Naive thymus-derived CD4-positive, alpha-beta T cell (primary cell): ENCODE measurements at regions of chr15 and their contacts with region 1.

Region 1: DNA sequence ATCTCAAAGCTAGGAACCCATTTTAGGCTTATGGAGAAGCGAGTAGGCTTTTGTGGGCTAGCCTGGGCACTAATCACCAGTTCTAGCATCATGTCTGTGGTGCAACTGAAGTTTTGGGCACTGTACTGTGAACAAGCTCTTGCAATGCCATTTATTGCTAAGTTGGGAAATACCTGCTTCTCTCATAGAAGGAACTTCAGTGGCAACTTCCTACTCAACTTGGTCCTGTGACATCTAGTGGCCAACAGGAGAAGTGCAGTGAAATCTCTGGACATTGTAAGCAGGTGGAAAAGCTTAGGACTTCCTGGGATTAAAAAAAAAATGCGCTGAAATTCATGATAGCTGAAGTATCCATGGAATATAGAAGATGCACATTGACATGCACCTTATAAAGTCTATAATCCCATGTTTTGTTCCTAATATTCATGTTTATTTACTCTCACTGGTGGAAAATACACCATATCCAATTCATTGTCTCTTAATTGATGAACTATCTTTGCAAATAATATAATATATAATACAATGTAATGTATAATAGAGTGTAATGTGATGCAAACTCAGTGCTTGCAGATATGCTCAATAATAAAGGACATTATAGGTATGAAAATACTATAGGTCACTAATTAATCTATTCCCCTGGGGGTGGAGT is 6.5 kb upstream of the ALDH1A3 start:
- DNase-seq: peak in 8 of 9 donors; percentile 10 to 59 (median 48)
- ATAC-seq: peak; percentile 83
- H3K4me3 ChIP-seq: no peak overlapping the region
- H3K4me3 Mint-ChIP-seq: no peak overlapping the region
- H3K27ac ChIP-seq: no peak overlapping the region
- H3K27ac Mint-ChIP-seq: no peak overlapping the region
- H3K4me1 ChIP-seq: no peaks in the 10 kb centered on the region
- H3K4me1 Mint-ChIP-seq: no peaks in the 10 kb centered on the region
- H3K27me3 ChIP-seq: peaks cover 0 to under 1% of the 10 kb centered on the region in 2 donors
- H3K27me3 Mint-ChIP-seq: peaks cover 14 to 43% (median 27%) of the 10 kb centered on the region in 5 donors

Region 2: GRCh38 chr15:100627789-100628395 is 245.3 kb before region 1 on chr15:
- CTCF ChIA-PET with region 1: interaction called, 8 read pairs
- POLR2A ChIA-PET with region 1: no interaction called
- intact Hi-C with region 1: loop called (anchors 1 kb)
- DNase-seq: peak; percentile 26 to 73 (median 63)
- ATAC-seq: peak; percentile 95
- H3K4me3 ChIP-seq: no peak overlapping the region
- H3K4me3 Mint-ChIP-seq: no peak overlapping the region
- H3K27ac ChIP-seq: no peak overlapping the region
- H3K27ac Mint-ChIP-seq: peak overlapping the region in 7 of 9 donors; percentile 10 to 57 (median 38)
- H3K4me1 ChIP-seq: no peaks in the 10 kb centered on the region
- H3K4me1 Mint-ChIP-seq: peaks cover 17 to 46% (median 33%) of the 10 kb centered on the region in 7 donors
- H3K27me3 ChIP-seq: no peaks in the 10 kb centered on the region
- H3K27me3 Mint-ChIP-seq: no peaks in the 10 kb centered on the region

Region 3: DNA sequence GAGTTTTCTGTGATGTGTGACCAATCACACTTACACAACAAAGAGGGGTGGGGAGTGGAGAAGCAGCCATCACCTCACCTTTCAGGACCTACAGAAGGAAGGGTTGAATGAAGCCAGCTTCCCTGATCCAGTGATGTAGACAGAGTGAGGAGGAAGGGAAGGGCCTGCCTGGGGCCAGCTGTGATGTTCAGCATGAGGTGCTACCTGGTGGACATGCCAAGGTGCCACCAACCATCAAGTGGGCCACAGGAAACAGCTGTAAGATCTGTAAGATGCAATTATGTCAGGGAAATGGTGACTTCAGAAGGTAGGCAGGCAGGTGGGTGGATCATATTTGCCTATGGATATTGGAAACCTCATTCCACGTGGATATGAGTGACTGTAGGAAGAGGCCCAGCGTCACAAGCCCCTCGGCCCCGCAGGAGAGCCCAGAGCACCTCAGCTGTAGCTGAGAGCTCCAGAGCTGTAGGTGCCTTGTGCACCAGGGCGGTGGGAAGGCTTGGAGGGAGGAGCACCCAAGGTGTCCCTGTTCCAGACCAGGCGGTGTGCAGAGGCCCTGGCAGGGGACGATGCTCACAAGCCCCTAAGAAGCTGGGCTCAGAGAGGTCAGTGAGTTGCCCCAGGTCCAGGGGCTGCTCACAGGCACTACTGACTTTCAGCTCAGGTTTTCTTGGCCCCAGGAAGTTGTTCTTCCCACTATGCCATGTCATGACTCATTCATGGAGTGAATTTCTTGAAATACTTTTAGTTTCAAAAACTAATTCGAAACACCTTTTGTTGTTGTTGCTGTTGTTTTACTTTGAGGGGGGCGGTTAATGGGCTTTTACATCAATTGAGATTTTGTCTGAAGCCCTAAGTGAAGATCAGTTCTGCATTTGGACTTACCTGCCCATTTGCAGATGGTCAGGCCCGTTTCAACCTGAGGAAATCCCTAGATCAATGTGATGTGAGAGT is 87.7 kb before region 1 on chr15:
- CTCF ChIA-PET with region 1: no interaction called
- POLR2A ChIA-PET with region 1: no interaction called
- intact Hi-C with region 1: no loop called
- DNase-seq: peak in 1 of 9 donors; percentile 16
- ATAC-seq: no peak
- H3K4me3 ChIP-seq: no peak overlapping the region
- H3K4me3 Mint-ChIP-seq: no peak overlapping the region
- H3K27ac ChIP-seq: no peak overlapping the region
- H3K27ac Mint-ChIP-seq: no peak overlapping the region
- H3K4me1 ChIP-seq: no peaks in the 10 kb centered on the region
- H3K4me1 Mint-ChIP-seq: no peaks in the 10 kb centered on the region
- H3K27me3 ChIP-seq: no peaks in the 10 kb centered on the region
- H3K27me3 Mint-ChIP-seq: peaks cover 3 to 24% (median 4%) of the 10 kb centered on the region in 5 donors

Region 4: DNA sequence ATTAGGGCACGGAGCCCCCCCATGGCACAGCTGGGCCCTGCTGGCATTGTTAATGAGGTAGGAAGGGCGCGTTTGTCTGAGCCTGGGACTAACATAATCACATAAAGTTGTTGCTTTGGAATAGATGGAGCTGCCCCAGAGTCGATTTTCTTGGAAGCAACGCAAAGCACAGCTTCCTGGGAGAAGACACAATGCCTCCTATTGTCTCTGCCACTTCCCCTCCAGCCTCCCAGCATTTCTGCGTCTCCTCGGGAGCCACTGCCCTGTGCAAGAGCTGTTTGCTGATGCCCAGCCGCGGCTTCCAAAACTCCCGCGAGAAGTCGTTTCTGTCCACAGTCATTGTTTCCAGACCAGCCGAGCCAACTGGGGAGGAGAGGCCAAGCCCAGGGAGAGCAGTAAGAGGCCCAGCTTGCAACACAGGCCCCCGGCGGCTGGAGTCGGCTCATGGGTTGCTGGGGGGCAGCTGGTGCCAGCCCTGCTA is 11.6 kb before region 1 on chr15:
- CTCF ChIA-PET with region 1: no interaction called
- POLR2A ChIA-PET with region 1: no interaction called
- intact Hi-C with region 1: no loop called
- DNase-seq: no peak
- ATAC-seq: no peak
- H3K4me3 ChIP-seq: no peak overlapping the region
- H3K4me3 Mint-ChIP-seq: no peak overlapping the region
- H3K27ac ChIP-seq: no peak overlapping the region
- H3K27ac Mint-ChIP-seq: no peak overlapping the region
- H3K4me1 ChIP-seq: no peaks in the 10 kb centered on the region
- H3K4me1 Mint-ChIP-seq: no peaks in the 10 kb centered on the region
- H3K27me3 ChIP-seq: no peaks in the 10 kb centered on the region
- H3K27me3 Mint-ChIP-seq: peaks cover 0 to 20% (median 13%) of the 10 kb centered on the region in 5 donors